GM10248 (cell line): ENCODE measurements at regions of chr4 and their contacts with region 1.

Region 1: GRCh38 chr4:37977471-37978247 is 17.5 kb downstream of the PTTG2 start:
- DNase-seq: peak; percentile 69
- CTCF ChIP-seq: peak; percentile 79

Region 2: GRCh38 chr4:37891260-37892159 is 86.1 kb before region 1 on chr4:
- CTCF ChIA-PET with region 1: interaction called, 10 read pairs
- POLR2A ChIA-PET with region 1: no interaction called
- DNase-seq: peak; percentile 75
- CTCF ChIP-seq: peak; percentile 9

Region 3: DNA sequence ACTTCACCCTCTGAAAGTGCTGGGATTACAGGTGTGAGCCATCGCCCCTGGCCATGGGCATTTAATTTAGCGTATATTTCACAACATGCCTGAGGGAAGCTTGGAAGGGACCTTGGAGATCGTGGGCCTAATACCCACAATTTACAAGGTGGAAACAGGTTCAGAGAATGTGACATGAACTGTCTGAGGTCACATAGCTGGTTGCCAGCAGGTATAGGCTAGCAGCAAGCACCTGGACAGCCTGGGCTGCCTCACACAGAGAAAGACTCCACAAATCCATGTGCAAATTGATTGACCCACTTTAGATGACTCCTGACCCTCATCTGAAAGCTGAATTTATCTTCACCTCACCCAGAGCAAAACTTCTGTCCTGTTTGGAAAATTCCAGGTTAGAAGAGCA is 11.7 kb before region 1 on chr4:
- CTCF ChIA-PET with region 1: interaction called, 10 read pairs
- POLR2A ChIA-PET with region 1: no interaction called
- DNase-seq: no peak
- CTCF ChIP-seq: no peak

Region 4: GRCh38 chr4:38044060-38044459 is 66.4 kb after region 1 on chr4:
- CTCF ChIA-PET with region 1: no interaction called
- POLR2A ChIA-PET with region 1: no interaction called
- DNase-seq: no peak
- CTCF ChIP-seq: no peak

Region 5: GRCh38 chr4:38055566-38055965 is 77.9 kb after region 1 on chr4:
- CTCF ChIA-PET with region 1: no interaction called
- POLR2A ChIA-PET with region 1: no interaction called
- DNase-seq: no peak
- CTCF ChIP-seq: no peak